ENCODE measurements at regions of chr7 and their contacts with region 1.

Region 1: GRCh38 chr7:74277628-74278027 is 11.6 kb upstream of the CLIP2 start:
- DNase-seq: no peak
- ATAC-seq: no peak
- H3K4me3 ChIP-seq: no peak overlapping the region
- H3K27ac ChIP-seq: no peak overlapping the region
- H3K4me1 ChIP-seq: peaks cover 32% of the 10 kb centered on the region
- H3K27me3 ChIP-seq: no peaks in the 10 kb centered on the region
- CTCF ChIP-seq: no peak

Region 2: GRCh38 chr7:74254129-74254857 is 23.3 kb before region 1 on chr7 and contains the start of gene RFC2:
- CTCF ChIA-PET with region 1: no interaction called
- POLR2A ChIA-PET with region 1: no interaction called
- intact Hi-C with region 1: loop called (anchors 2 kb)
- DNase-seq: peak; percentile 95
- ATAC-seq: peak; percentile 91
- H3K4me3 ChIP-seq: peak within 1 kb of the TSS; percentile 95
- H3K27ac ChIP-seq: peak within 1 kb of the TSS; percentile 76
- H3K4me1 ChIP-seq: peaks cover 11% of the 10 kb centered on the region
- H3K27me3 ChIP-seq: no peaks in the 10 kb centered on the region
- CTCF ChIP-seq: no peak
- total RNA-seq, gene RFC2: 57.4 and 60.4 TPM in 2 replicates

Measured in PC-3 (cell line).